Transverse colon (tissue), 4 donors: ENCODE measurements at regions of chr2 and their contacts with region 1.

Region 1: GRCh38 chr2:121076885-121077549 is 208.0 kb downstream of the TFCP2L1 start:
- DNase-seq: peak; percentile 75
- H3K4me3 ChIP-seq: no peak overlapping the region
- H3K27ac ChIP-seq: no peak overlapping the region
- H3K4me1 ChIP-seq: peaks cover 0 to 11% (median 4%) of the 10 kb centered on the region in 4 donors
- H3K27me3 ChIP-seq: peaks cover 39% of the 10 kb centered on the region
- CTCF ChIP-seq: peak; percentile 74 to 91 (median 83)
- EP300 ChIP-seq: no peak
- POLR2A ChIP-seq: no peak

Region 2: DNA sequence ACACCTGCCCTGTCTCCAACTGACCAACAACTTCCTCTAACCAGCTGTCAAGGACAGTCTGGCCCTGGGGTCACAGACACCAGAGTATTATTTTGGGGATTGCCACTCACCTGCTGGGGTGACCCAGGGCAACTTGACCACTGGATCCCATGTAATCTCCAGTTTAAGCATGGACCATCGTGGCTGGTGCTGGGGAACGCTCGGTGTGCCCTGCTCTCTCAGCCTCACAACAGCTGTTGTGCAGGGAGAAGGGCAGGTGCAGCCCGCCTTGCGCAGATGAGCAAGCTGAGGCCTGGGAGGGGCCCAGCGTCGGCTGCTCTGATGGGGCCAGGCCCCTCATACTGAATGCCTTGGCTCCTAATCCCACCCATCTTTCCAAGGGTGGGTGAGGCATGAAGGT is 752.1 kb before region 1 on chr2:
- in situ Hi-C with region 1: no loop called
- intact Hi-C with region 1: loop called (anchors 5 kb)
- DNase-seq: no peak
- H3K4me3 ChIP-seq: no peak overlapping the region
- H3K27ac ChIP-seq: no peak overlapping the region
- H3K4me1 ChIP-seq: no peaks in the 10 kb centered on the region
- H3K27me3 ChIP-seq: no peaks in the 10 kb centered on the region
- CTCF ChIP-seq: no peak
- EP300 ChIP-seq: no peak
- POLR2A ChIP-seq: no peak

Region 3: DNA sequence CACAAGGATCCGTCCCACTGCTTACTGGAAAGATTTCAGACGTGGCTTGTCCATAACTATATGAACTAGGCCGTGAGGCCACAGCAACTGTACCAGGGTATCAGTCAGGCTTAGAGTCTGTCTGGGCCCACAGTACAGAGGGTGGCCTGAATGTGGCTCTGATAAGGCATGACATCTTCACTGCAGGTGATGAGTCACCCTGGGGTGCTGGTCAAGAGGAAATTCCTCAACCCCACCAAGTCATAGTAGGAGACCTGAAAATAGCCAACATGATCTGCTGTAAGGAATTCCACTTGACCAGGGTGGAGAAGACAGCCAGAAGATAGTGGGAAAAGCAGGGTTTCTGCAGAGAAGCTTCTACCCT is 623.4 kb before region 1 on chr2:
- in situ Hi-C with region 1: no loop called
- intact Hi-C with region 1: no loop called
- DNase-seq: no peak
- H3K4me3 ChIP-seq: no peak overlapping the region
- H3K27ac ChIP-seq: no peak overlapping the region
- H3K4me1 ChIP-seq: no peaks in the 10 kb centered on the region
- H3K27me3 ChIP-seq: no peaks in the 10 kb centered on the region
- CTCF ChIP-seq: no peak
- EP300 ChIP-seq: no peak
- POLR2A ChIP-seq: no peak

Region 4: DNA sequence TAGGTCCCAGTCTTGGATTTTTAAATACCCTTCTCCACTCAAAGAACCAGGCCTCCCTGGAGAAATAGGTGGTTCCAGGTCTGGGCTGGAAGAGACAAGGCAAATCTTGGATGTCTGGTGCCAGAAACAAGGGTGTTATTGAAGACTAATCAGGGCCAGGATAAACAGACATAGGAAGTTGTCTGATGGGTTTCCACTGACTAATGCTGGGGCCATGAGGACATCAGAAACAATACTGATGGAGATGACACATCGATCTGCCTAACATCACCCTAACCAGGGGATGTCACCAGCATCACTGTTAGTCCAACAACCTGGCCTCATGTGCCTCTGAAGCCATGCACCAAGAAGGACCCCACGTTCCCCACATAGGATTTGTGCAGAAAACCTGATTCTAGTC is 383.9 kb before region 1 on chr2:
- in situ Hi-C with region 1: loop called (anchors 5 to 10 kb)
- intact Hi-C with region 1: loop called (anchors 2 kb)
- DNase-seq: no peak
- H3K4me3 ChIP-seq: no peak overlapping the region
- H3K27ac ChIP-seq: no peak overlapping the region
- H3K4me1 ChIP-seq: no peaks in the 10 kb centered on the region
- H3K27me3 ChIP-seq: peaks cover 39% of the 10 kb centered on the region
- CTCF ChIP-seq: no peak
- EP300 ChIP-seq: no peak
- POLR2A ChIP-seq: no peak

Region 5: DNA sequence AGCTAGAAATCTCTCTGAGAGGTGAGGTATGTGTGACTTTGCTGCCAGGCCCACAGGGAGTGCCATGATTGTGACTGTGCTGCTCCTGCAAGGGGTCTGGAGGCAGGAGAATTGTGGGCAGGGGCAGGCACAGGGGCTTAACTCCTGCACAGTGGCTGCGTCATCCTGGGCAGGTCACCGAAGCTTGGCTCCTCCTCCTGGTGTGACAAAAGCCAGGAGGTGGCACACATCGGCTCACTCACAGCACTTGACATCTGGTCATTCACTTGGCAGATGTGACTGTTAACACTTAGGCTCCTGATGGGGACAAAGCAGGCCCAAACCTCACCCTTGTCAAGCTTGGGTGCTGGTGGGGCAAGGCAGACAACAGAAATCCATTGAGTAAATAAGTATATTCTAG is 377.7 kb before region 1 on chr2:
- in situ Hi-C with region 1: loop called (anchors 5 to 10 kb)
- intact Hi-C with region 1: loop called (anchors 2 kb)
- DNase-seq: no peak
- H3K4me3 ChIP-seq: no peak overlapping the region
- H3K27ac ChIP-seq: no peak overlapping the region
- H3K4me1 ChIP-seq: no peaks in the 10 kb centered on the region
- H3K27me3 ChIP-seq: peaks cover 41% of the 10 kb centered on the region
- CTCF ChIP-seq: no peak
- EP300 ChIP-seq: no peak
- POLR2A ChIP-seq: no peak

Region 6: GRCh38 chr2:121044412-121044811 is 32.6 kb before region 1 on chr2:
- in situ Hi-C with region 1: no loop called
- intact Hi-C with region 1: no loop called
- DNase-seq: peak; percentile 12
- H3K4me3 ChIP-seq: no peak overlapping the region
- H3K27ac ChIP-seq: no peak overlapping the region
- H3K4me1 ChIP-seq: no peaks in the 10 kb centered on the region
- H3K27me3 ChIP-seq: no peaks in the 10 kb centered on the region
- CTCF ChIP-seq: peak in 2 of 5 experiments; percentile 14 to 16
- EP300 ChIP-seq: no peak
- POLR2A ChIP-seq: no peak

Region 7: GRCh38 chr2:121356058-121356640 is 279.1 kb after region 1 on chr2:
- in situ Hi-C with region 1: loop called in 1 of 4 experiments (anchors 25 kb)
- intact Hi-C with region 1: no loop called
- DNase-seq: peak; percentile 59
- H3K4me3 ChIP-seq: no peak overlapping the region
- H3K27ac ChIP-seq: peak overlapping the region in 3 of 4 donors; percentile 70 to 75 (median 73)
- H3K4me1 ChIP-seq: peaks cover 3 to 26% (median 13%) of the 10 kb centered on the region in 4 donors
- H3K27me3 ChIP-seq: no peaks in the 10 kb centered on the region
- CTCF ChIP-seq: peak; percentile 56 to 71 (median 69)
- EP300 ChIP-seq: no peak
- POLR2A ChIP-seq: no peak

Region 8: GRCh38 chr2:121699421-121700333 is 622.7 kb after region 1 on chr2:
- in situ Hi-C with region 1: loop called in 1 of 4 experiments (anchors 25 kb)
- intact Hi-C with region 1: no loop called
- DNase-seq: peak; percentile 52
- H3K4me3 ChIP-seq: no peak overlapping the region
- H3K27ac ChIP-seq: peak overlapping the region in 1 of 4 donors; percentile 23
- H3K4me1 ChIP-seq: peaks cover 0 to 5% (median 0%) of the 10 kb centered on the region in 4 donors
- H3K27me3 ChIP-seq: no peaks in the 10 kb centered on the region
- CTCF ChIP-seq: no peak
- EP300 ChIP-seq: no peak
- POLR2A ChIP-seq: no peak